Kidney (tissue), 22 donors: ENCODE measurements at regions of chr3 and their contacts with region 1.

Region 1: DNA sequence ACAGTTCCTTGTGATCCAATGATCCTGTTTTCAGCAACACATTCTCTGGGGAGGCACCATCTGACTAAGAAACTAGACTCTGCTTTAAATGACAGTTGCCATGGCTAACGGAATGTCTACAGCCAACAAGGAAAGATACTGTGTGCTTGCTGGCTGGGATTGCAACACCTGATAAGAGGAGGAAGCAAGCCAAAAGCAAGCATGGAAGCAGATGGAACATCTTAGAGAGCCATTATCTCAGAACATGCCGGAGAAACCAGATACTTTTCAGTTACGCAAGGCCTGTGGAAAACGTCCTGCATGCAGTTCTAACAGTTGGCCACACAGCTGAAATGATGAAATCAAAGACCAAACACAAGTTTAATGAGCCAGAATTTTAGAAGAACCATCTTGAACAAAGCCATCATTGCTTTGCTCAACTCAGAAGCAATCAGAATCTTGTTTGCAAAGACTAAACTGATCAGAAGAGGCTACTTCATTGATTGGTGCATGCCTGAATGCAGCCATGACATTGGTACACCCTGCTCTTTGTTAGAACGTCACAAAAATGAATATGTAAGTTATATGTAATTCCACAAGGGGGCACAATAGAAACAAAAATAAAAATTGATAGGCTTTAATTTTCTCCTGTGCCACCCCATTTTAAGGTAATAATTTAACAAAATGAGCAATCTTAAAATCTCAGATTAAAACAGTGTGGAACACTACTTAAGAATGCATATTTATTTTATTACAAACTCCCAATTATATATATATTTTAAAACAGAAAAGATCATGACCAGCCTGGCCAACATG is 50.8 kb downstream of the GXYLT2 start:
- DNase-seq: peak in 3 of 5 donors; percentile 50 to 77 (median 76)
- H3K4me3 ChIP-seq: peak overlapping the region in 1 of 3 donors; percentile 16
- H3K27ac ChIP-seq: no peak overlapping the region
- H3K4me1 ChIP-seq: no peaks in the 10 kb centered on the region
- H3K27me3 ChIP-seq: no peaks in the 10 kb centered on the region
- CTCF ChIP-seq: peak; percentile 35

Region 2: GRCh38 chr3:73060302-73060723 is 121.6 kb after region 1 on chr3:
- intact Hi-C with region 1: loop called (anchors 10 kb)
- DNase-seq: no peak
- H3K4me3 ChIP-seq: no peak overlapping the region
- H3K27ac ChIP-seq: no peak overlapping the region
- H3K4me1 ChIP-seq: no peaks in the 10 kb centered on the region
- H3K27me3 ChIP-seq: no peaks in the 10 kb centered on the region
- CTCF ChIP-seq: no peak